ENCODE measurements at regions of chr5 and their contacts with region 1.

Region 1: DNA sequence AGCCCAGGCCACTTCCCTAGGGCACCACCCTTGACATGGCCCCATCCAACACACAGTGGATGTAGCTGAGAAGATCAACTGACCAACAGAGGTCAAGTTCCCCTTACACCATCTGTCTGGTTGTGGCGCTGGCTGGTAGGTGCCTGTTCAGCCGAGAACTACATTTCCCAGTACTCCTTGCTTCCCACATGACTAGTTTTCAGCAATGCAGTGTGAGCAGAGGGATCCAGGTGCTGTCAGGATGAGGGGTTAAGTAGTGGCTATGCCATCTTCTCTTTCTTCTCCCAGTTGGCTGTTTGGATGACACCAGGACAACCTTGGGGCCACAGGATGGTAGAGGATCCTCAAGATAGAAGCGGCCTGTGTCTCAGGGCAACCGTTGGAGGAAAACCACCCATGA is 48.6 kb upstream of the SH3PXD2B start:
- DNase-seq: peak; percentile 14 to 17
- H3K4me3 ChIP-seq: no peak overlapping the region
- H3K27ac ChIP-seq: peak overlapping the region; percentile 22 to 75
- H3K4me1 ChIP-seq: peaks cover 0 to 3% of the 10 kb centered on the region in 2 donors
- H3K27me3 ChIP-seq: no peaks in the 10 kb centered on the region
- CTCF ChIP-seq: no peak
- POLR2A ChIP-seq: no peak

Region 2: DNA sequence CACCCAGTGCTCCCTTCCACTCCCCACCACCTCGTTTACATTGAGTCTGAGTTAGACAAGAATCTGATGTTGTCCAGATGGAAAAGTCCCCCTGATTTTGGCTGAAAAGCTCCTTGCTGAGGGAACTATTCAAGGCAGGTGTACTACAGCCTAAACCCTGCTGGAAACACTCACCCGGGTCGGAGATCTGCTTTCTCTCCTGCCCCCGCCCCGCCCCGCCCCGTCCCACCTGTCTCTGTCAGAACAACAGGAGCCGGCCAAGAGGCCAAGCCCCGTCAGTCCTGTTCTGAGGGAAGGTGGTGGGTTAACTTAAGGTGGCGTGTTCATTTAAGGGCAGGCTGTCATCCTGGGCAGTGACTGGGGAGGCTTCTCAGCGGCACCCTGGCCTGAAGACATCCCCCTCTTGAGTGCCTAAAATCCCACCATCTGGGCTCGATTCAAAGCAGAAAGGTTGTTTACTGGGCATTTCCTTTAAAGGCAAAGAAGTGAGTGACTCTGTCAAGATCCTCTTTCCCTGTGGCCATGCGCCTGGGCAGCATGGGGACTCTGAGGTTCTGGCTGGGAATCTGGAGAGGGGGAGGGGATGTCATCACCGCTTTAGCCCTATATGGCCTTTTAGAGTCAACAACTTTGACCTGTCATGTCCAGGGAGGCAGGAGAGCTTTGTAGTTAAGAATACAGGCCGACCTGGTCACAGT is 67.0 kb after region 1 on chr5:
- intact Hi-C with region 1: loop called (anchors 10 kb)
- DNase-seq: no peak
- H3K4me3 ChIP-seq: no peak overlapping the region
- H3K27ac ChIP-seq: peak overlapping the region; percentile 9 to 61
- H3K4me1 ChIP-seq: no peaks in the 10 kb centered on the region
- H3K27me3 ChIP-seq: no peaks in the 10 kb centered on the region
- CTCF ChIP-seq: no peak
- POLR2A ChIP-seq: no peak